ENCODE measurements at regions of chr13 and their contacts with region 1.

Region 1: DNA sequence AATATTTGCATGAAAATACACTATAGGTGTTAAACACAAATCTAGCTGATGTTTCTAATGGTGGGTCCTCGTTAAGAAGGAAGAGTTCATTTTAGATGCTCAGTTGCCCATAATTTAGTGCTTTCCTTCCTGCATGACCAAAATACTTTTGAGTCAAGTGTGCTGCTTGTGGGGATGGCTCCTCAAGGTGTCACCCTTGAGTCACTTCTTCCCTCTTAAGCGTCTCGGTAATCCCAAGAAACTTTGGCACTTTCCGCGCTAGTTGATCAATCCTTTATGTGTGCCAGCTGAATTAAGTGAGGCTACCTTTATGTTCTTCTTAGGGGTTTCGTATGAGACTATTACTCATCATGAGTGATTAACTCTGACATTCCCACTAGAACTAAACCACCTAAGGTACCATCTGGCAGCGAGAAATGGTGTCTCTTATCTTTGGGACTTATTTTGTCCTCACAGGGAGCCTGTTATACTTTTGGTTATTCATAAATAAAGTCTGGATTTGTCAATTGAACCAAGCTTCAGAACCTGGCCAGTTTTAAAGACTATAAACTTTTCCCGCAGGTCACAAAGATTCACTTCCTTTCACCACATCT is 106.8 kb downstream of the NHLRC3 start:
- DNase-seq: peak; percentile 3
- H3K4me3 Mint-ChIP-seq: no peak overlapping the region
- H3K27ac Mint-ChIP-seq: no peak overlapping the region
- H3K4me1 Mint-ChIP-seq: peaks cover 18% of the 10 kb centered on the region
- H3K27me3 Mint-ChIP-seq: peaks cover 16% of the 10 kb centered on the region

Region 2: DNA sequence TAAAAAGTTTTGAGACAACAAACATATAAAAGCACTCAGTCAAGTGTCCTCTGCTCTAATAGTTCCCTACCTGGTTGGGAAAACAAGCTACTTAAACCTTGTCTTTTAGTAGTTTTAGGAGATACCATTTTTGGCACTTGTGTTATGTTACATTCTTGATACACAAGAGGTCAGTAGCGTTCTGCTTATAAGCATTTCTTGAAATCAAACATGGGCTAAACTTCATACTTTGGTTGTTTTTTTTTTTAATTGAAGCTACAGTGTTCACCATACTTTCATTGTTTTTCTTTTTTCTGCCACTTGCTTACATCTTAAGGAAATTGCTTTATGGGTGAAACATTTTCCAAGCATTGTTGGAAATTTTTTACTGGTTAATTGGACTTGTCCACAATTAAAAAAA is 93.9 kb before region 1 on chr13:
- intact Hi-C with region 1: loop called (anchors 5 kb)
- DNase-seq: no peak
- H3K4me3 Mint-ChIP-seq: no peak overlapping the region
- H3K27ac Mint-ChIP-seq: no peak overlapping the region
- H3K4me1 Mint-ChIP-seq: peaks cover 6% of the 10 kb centered on the region
- H3K27me3 Mint-ChIP-seq: no peaks in the 10 kb centered on the region

Region 3: GRCh38 chr13:39196958-39197646 is 52.1 kb after region 1 on chr13:
- intact Hi-C with region 1: loop called (anchors 1 kb)
- DNase-seq: no peak
- H3K4me3 Mint-ChIP-seq: no peak overlapping the region
- H3K27ac Mint-ChIP-seq: peak overlapping the region; percentile 59
- H3K4me1 Mint-ChIP-seq: peaks cover 13% of the 10 kb centered on the region
- H3K27me3 Mint-ChIP-seq: no peaks in the 10 kb centered on the region